ENCODE measurements at regions of chr15 and their contacts with region 1.

Region 1: DNA sequence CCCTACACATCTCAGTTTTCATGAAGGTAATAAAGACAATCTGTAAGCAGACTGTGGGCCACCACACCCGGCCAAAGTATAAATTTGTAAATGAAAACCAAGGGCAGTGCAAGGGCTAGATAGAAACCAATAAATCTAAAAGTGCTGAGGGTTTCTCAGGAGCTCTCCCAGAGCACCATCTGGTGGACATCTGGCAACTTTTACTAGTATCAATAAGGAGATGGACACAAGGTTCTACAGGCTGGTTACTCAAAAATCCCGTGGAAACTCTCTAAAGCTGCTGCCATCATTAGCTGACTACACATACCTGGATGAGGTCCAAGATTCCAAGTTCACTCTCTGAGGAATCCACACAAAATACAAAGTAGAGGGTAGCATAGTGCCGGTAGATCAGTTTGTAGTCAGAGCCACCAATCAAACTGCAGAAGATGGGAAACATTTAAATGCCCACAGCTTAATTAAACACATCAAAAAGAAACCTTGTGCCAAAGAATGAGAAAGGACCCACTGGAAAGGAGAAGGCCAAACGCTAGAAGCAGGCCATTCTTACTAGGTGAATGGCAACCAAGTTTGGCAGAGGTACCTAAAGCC is 5.5 kb downstream of the AP3S2 start:
- DNase-seq: peak in 1 of 2 experiments; percentile 39
- H3K4me3 ChIP-seq: no peak overlapping the region
- H3K4me3 Mint-ChIP-seq: no peak overlapping the region
- H3K27ac Mint-ChIP-seq: no peak overlapping the region
- H3K4me1 ChIP-seq: no peaks in the 10 kb centered on the region
- H3K4me1 Mint-ChIP-seq: no peaks in the 10 kb centered on the region
- H3K27me3 ChIP-seq: no peaks in the 10 kb centered on the region
- H3K27me3 Mint-ChIP-seq: no peaks in the 10 kb centered on the region
- CTCF ChIP-seq: peak; percentile 48 to 63

Region 2: GRCh38 chr15:89648106-89649012 is 239.9 kb before region 1 on chr15:
- CTCF ChIA-PET with region 1: interaction called, 10 read pairs
- POLR2A ChIA-PET with region 1: no interaction called
- intact Hi-C with region 1: no loop called
- DNase-seq: no peak
- H3K4me3 ChIP-seq: no peak overlapping the region
- H3K4me3 Mint-ChIP-seq: no peak overlapping the region
- H3K27ac Mint-ChIP-seq: no peak overlapping the region
- H3K4me1 ChIP-seq: no peaks in the 10 kb centered on the region
- H3K4me1 Mint-ChIP-seq: no peaks in the 10 kb centered on the region
- H3K27me3 ChIP-seq: no peaks in the 10 kb centered on the region
- H3K27me3 Mint-ChIP-seq: no peaks in the 10 kb centered on the region
- CTCF ChIP-seq: no peak